ENCODE measurements at regions of chrX and their contacts with region 1.

Region 1: GRCh38 chrX:112819010-112819640 is 21.5 kb downstream of the AMOT start:
- DNase-seq: peak; percentile 49 to 84
- H3K4me3 ChIP-seq: peak overlapping the region; percentile 35; the same call in 1 of the 2 replicates
- H3K27ac ChIP-seq: peak overlapping the region; percentile 86
- H3K4me1 ChIP-seq: peaks cover 43% of the 10 kb centered on the region
- H3K27me3 ChIP-seq: no peaks in the 10 kb centered on the region
- CTCF ChIP-seq: no peak

Region 2: GRCh38 chrX:111470681-111471403 is 1348.3 kb before region 1 on chrX:
- CTCF ChIA-PET with region 1: no interaction called
- POLR2A ChIA-PET with region 1: no interaction called
- intact Hi-C with region 1: no loop called
- DNase-seq: no peak
- H3K4me3 ChIP-seq: no peak overlapping the region
- H3K27ac ChIP-seq: no peak overlapping the region
- H3K4me1 ChIP-seq: no peaks in the 10 kb centered on the region
- H3K27me3 ChIP-seq: no peaks in the 10 kb centered on the region
- CTCF ChIP-seq: no peak

Region 3: GRCh38 chrX:112832481-112833100 is 13.5 kb after region 1 on chrX:
- CTCF ChIA-PET with region 1: no interaction called
- POLR2A ChIA-PET with region 1: interaction called, 5 read pairs
- intact Hi-C with region 1: loop called (anchors 1 kb)
- DNase-seq: peak; percentile 89 to 96
- H3K4me3 ChIP-seq: peak overlapping the region; percentile 30; the same call in 1 of the 2 replicates
- H3K27ac ChIP-seq: peak overlapping the region; percentile 74
- H3K4me1 ChIP-seq: peaks cover 53% of the 10 kb centered on the region
- H3K27me3 ChIP-seq: no peaks in the 10 kb centered on the region
- CTCF ChIP-seq: no peak

Region 4: DNA sequence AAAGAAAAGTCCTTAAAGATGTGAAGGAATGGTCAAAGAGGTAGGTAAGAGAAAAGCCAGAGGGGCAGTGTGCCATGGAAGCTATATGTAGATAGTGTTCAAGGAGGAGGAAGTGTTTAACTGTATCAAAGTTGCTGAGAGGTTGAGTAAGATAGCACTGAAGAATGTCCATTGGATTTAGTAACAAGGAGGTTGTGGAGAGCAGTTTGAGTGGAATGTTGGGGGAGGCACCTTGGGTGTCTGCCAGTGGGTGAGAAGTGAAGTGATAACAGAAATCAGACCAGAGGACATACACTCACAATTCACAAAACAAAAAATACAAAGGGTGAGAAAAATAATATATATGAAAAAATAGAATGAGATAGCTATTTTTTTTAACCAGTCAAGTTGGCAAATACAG is 142.9 kb after region 1 on chrX:
- CTCF ChIA-PET with region 1: no interaction called
- POLR2A ChIA-PET with region 1: no interaction called
- intact Hi-C with region 1: loop called (anchors 1 kb)
- DNase-seq: peak; percentile 66 to 94
- H3K4me3 ChIP-seq: no peak overlapping the region
- H3K27ac ChIP-seq: peak overlapping the region; percentile 94
- H3K4me1 ChIP-seq: peaks cover 56% of the 10 kb centered on the region
- H3K27me3 ChIP-seq: no peaks in the 10 kb centered on the region
- CTCF ChIP-seq: no peak